Calu3 (cell line): ENCODE measurements at regions of chr17 and their contacts with region 1.

Region 1: GRCh38 chr17:73429440-73430164 is 117.8 kb upstream of the CDC42EP4 start:
- DNase-seq: peak; percentile 88
- H3K4me3 Mint-ChIP-seq: no peak overlapping the region
- H3K27ac Mint-ChIP-seq: no peak overlapping the region
- H3K4me1 Mint-ChIP-seq: no peaks in the 10 kb centered on the region
- H3K27me3 Mint-ChIP-seq: peaks cover 46% of the 10 kb centered on the region
- CTCF ChIP-seq: peak; percentile 87

Region 2: DNA sequence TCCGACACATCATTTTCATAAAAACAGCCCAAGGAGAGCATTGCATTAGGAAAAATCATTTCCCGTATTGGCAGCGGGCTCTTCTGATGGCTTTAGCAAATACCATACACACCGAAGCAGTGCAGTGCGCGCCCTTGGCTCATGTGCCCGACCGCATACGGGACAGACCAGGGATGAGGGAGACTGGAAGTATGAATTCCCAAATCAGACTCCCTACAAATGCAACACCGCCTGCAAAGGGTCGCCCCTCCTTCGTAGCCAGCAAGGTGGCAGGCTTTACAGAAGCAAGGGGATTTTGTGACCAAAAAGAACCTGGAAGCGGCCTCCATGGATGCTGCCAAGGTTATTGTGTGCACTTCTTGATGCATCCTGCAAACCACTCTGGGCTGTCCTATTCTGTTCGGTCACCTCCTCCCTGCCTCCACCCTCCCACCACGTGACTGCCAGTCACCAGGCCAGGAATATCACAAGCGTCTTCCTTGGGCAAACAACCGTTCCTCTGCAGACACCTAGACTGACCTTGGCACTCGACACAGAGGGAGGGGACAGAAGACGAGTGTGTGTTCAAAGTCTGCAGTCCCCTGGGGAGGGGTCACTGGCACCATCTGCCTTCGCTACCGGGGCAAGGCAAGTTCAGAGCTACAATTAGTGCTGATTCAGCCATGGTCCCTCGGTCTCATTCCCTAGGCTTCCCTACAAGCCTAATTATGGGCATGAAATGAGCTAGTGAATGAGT is 797.5 kb before region 1 on chr17:
- CTCF ChIA-PET with region 1: interaction called, 11 read pairs
- intact Hi-C with region 1: no loop called
- DNase-seq: peak; percentile 57
- H3K4me3 Mint-ChIP-seq: no peak overlapping the region
- H3K27ac Mint-ChIP-seq: peak overlapping the region; percentile 72
- H3K4me1 Mint-ChIP-seq: peaks cover 51% of the 10 kb centered on the region
- H3K27me3 Mint-ChIP-seq: no peaks in the 10 kb centered on the region
- CTCF ChIP-seq: no peak

Region 3: DNA sequence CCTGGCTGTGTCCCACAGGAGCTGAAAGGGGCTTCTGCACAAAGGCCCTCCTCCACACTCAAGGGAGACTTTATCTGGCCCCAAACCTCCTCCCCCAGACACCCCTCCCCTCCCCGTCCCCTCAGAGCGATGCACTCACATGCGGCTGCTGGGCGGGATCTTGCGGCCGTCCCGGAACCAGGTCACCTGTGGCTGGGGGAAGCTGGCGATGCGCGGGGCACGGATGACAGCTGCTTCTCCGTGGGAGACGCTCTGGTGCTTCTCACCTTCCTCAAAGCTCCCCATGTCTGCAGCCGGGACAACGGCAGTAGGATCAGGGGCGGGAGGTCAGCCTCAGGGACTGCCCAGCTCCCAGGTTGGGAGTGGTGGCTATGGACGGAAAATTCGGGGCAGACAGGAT is 26.2 kb after region 1 on chr17:
- CTCF ChIA-PET with region 1: no interaction called
- intact Hi-C with region 1: no loop called
- DNase-seq: no peak
- H3K4me3 Mint-ChIP-seq: no peak overlapping the region
- H3K27ac Mint-ChIP-seq: no peak overlapping the region
- H3K4me1 Mint-ChIP-seq: no peaks in the 10 kb centered on the region
- H3K27me3 Mint-ChIP-seq: peaks cover 91% of the 10 kb centered on the region
- CTCF ChIP-seq: no peak

Region 4: DNA sequence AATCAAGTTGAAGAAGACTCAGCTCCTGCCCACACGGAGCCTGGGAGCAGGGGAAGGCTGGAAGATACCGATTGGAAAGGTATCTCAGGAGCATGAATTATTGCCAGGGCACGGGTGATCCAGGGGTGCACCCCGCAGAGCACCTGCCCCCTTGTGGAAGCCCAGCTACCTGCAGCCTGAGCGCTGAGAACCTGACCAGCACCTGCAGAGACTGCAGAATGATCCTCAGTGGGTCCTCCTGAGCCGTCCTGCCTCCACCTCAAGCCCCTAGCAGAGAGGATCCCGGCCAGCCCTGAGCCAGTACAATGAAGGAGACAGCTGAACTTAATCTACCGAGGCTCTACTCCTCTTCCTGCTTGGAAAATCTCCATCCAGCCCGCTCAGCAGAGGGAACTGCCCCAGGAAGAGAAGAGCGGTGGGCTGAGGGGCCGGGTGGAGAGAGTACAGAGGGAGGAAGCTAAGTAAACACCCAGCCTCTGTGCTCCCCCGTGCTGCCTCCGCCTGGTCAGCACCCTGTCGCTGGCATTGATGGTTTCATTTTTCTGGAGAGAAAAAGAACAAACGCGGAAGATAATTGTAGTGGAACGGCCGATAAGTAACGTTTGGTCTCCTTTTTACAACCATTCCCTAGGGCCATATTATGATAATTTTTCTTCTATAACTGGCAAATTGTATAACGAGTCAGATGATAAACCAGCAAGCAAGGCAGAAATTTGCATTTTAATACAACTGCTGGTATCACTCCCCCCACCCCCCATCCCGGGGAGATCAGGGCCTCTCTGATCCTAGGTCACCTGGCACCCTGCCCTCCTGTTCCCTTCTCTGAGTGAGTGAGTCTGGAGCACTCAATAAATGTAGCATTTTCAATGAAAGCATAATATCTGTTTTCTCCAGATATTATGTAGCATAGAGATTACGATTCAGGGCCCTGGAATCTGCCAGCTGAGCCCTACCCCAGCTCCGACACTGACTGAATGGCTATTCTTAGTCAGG is 569.3 kb after region 1 on chr17:
- CTCF ChIA-PET with region 1: no interaction called
- intact Hi-C with region 1: loop called (anchors 2 kb)
- DNase-seq: peak; percentile 81
- H3K4me3 Mint-ChIP-seq: no peak overlapping the region
- H3K27ac Mint-ChIP-seq: no peak overlapping the region
- H3K4me1 Mint-ChIP-seq: no peaks in the 10 kb centered on the region
- H3K27me3 Mint-ChIP-seq: peaks cover 54% of the 10 kb centered on the region
- CTCF ChIP-seq: peak; percentile 84

Region 5: GRCh38 chr17:74176546-74177001 is 747.0 kb after region 1 on chr17:
- CTCF ChIA-PET with region 1: no interaction called
- intact Hi-C with region 1: loop called (anchors 10 kb)
- DNase-seq: peak; percentile 75
- H3K4me3 Mint-ChIP-seq: no peak overlapping the region
- H3K27ac Mint-ChIP-seq: no peak overlapping the region
- H3K4me1 Mint-ChIP-seq: no peaks in the 10 kb centered on the region
- H3K27me3 Mint-ChIP-seq: peaks cover 98% of the 10 kb centered on the region
- CTCF ChIP-seq: peak; percentile 78